ENCODE measurements at regions of chr6 and their contacts with region 1.

Region 1: GRCh38 chr6:106488494-106489370 is 128.2 kb downstream of the CRYBG1 start:
- DNase-seq: no peak
- ATAC-seq: no peak
- H3K4me3 ChIP-seq: no peak overlapping the region
- H3K4me3 Mint-ChIP-seq: no peak overlapping the region
- H3K27ac ChIP-seq: no peak overlapping the region
- H3K27ac Mint-ChIP-seq: no peak overlapping the region
- H3K4me1 ChIP-seq: no peaks in the 10 kb centered on the region
- H3K4me1 Mint-ChIP-seq: peaks cover 0 to 2% (median 0%) of the 10 kb centered on the region in 7 donors
- H3K27me3 ChIP-seq: no peaks in the 10 kb centered on the region
- H3K27me3 Mint-ChIP-seq: peaks cover 0 to 24% (median 3%) of the 10 kb centered on the region in 5 donors

Region 2: DNA sequence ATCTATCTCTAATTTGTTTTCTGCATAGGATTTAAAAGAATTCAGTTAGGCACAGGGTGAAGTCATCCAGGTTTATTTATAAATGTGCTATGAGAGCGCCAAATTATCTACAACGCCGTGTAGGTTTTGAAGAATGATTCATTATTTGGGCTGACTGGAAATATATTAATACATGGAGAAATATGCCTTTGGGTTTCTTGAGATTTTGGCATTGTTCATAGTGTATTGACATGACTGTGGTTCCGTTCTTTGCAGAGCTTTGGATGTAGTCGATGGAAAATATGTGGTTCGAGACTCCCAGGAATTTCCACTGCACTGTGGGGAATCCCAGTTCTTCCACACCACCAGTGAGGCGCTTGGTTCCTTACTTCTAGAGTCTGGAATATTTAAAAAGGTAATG is 37.3 kb before region 1 on chr6:
- CTCF ChIA-PET with region 1: no interaction called
- POLR2A ChIA-PET with region 1: no interaction called
- intact Hi-C with region 1: loop called in 1 of 2 experiments (anchors 5 kb)
- DNase-seq: no peak
- ATAC-seq: no peak
- H3K4me3 ChIP-seq: no peak overlapping the region
- H3K4me3 Mint-ChIP-seq: no peak overlapping the region
- H3K27ac ChIP-seq: no peak overlapping the region
- H3K27ac Mint-ChIP-seq: no peak overlapping the region
- H3K4me1 ChIP-seq: peaks cover 0 to 5% of the 10 kb centered on the region in 2 donors
- H3K4me1 Mint-ChIP-seq: peaks cover 5 to 15% (median 14%) of the 10 kb centered on the region in 7 donors
- H3K27me3 ChIP-seq: no peaks in the 10 kb centered on the region
- H3K27me3 Mint-ChIP-seq: peaks cover 0 to 15% (median 0%) of the 10 kb centered on the region in 5 donors

Measured in naive thymus-derived CD4-positive, alpha-beta T cell (primary cell).